ENCODE measurements at regions of chr1 and their contacts with region 1.

Region 1: DNA sequence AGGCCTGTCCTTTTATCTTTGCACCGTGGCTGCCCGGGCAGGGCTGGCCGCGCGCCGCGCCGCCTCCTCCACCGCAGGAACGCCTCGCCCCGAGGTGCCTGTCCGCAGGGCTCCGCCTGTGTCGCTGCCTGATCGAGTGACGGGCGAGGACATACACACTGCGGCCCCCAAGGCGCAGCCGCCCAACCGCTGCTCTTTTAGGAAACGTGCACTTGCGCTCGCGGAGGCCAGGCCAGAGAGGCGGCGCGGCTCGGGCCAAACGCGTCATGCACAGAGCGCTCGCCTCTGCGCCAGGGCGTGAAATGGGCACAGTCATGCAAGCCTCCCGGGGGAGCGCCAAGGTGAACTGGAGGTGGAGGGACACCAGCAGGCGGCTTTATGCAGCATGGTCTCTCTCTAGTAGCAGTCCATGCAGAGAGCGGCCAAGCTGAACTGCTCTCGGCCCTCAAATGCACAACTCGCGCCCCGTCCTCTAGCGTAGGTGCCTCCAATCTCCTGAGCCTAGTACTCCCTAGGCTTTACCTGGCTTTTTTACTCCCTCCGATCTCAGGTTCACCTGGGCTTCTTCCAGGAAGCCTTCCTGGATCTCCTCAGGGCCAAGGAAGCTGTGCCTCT is 12.9 kb downstream of the TRABD2B start:
- DNase-seq: no peak
- ATAC-seq: no peak
- H3K4me3 ChIP-seq: no peak overlapping the region
- H3K27ac ChIP-seq: no peak overlapping the region
- H3K4me1 ChIP-seq: no peaks in the 10 kb centered on the region
- H3K27me3 ChIP-seq: peaks cover 0 to 15% of the 10 kb centered on the region in 2 experiments; a peak in 2 of 5 replicates
- CTCF ChIP-seq: no peak
- EP300 ChIP-seq: no peak
- POLR2A ChIP-seq: no peak
- RAD21 ChIP-seq: no peak

Region 2: GRCh38 chr1:47527658-47528255 is 456.5 kb before region 1 on chr1:
- CTCF ChIA-PET with region 1: no interaction called
- POLR2A ChIA-PET with region 1: no interaction called
- in situ Hi-C with region 1: no loop called
- intact Hi-C with region 1: loop called (anchors 5 kb)
- DNase-seq: peak; percentile 12
- ATAC-seq: peak; percentile 64
- H3K4me3 ChIP-seq: no peak overlapping the region
- H3K27ac ChIP-seq: no peak overlapping the region
- H3K4me1 ChIP-seq: no peaks in the 10 kb centered on the region
- H3K27me3 ChIP-seq: peaks cover 3 to 6% of the 10 kb centered on the region in 2 experiments; a peak in 3 of 5 replicates
- CTCF ChIP-seq: peak; percentile 68
- EP300 ChIP-seq: no peak
- POLR2A ChIP-seq: no peak
- RAD21 ChIP-seq: no peak